ENCODE measurements at regions of chr6 and their contacts with region 1.

Region 1: GRCh38 chr6:138987640-138988468 is at the start of gene REPS1:
- DNase-seq: peak; percentile 83
- ATAC-seq: peak; percentile 87
- H3K4me3 ChIP-seq: peak within 1 kb of the TSS; percentile 95
- H3K27ac ChIP-seq: peak within 1 kb of the TSS; percentile 56
- H3K4me1 ChIP-seq: peaks cover 33% of the 10 kb centered on the region
- H3K27me3 ChIP-seq: no peaks in the 10 kb centered on the region
- CTCF ChIP-seq: peak; percentile 76
- total RNA-seq, gene REPS1: 27.4 and 37.4 TPM in 2 replicates

Region 2: GRCh38 chr6:138752017-138752416 is 235.8 kb before region 1 on chr6:
- CTCF ChIA-PET with region 1: no interaction called
- POLR2A ChIA-PET with region 1: no interaction called
- intact Hi-C with region 1: no loop called
- DNase-seq: no peak
- ATAC-seq: no peak
- H3K4me3 ChIP-seq: no peak overlapping the region
- H3K27ac ChIP-seq: no peak overlapping the region
- H3K4me1 ChIP-seq: no peaks in the 10 kb centered on the region
- H3K27me3 ChIP-seq: no peaks in the 10 kb centered on the region
- CTCF ChIP-seq: no peak

Region 3: DNA sequence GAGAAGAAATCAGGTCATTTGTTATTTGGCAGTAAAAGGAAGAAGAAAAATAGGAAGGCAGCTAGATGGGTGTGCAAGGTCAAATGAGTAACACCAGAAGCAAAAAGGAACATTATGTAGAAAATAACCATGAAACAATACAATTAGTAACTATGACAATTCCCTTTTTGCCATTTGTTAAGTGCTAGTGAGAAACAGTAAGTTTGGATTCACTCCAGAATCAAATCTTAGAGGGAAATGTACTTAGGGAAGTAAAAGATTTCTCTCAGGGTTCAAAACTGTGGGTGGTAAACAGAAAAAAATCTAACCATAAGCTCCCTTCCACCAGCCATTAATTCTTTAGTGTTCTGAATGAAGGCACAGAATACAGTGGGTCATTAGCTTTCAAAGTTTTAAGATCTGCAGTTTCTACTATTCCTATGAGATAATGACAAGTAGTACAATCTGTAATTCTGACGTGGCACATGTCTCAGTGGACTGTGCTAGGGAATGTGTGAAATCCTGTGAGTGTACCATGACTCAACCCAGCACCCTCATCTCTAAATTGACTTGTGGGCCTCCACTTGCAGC is 16.9 kb before region 1 on chr6:
- CTCF ChIA-PET with region 1: no interaction called
- POLR2A ChIA-PET with region 1: no interaction called
- intact Hi-C with region 1: loop called (anchors 2 kb)
- DNase-seq: peak; percentile 81
- ATAC-seq: peak; percentile 72
- H3K4me3 ChIP-seq: no peak overlapping the region
- H3K27ac ChIP-seq: peak overlapping the region; percentile 85
- H3K4me1 ChIP-seq: peaks cover 52% of the 10 kb centered on the region
- H3K27me3 ChIP-seq: no peaks in the 10 kb centered on the region
- CTCF ChIP-seq: no peak